ENCODE measurements at regions of chrX and their contacts with region 1.

Region 1: GRCh38 chrX:20159797-20160385 is 18.3 kb upstream of the EIF1AX start:
- DNase-seq: no peak
- ATAC-seq: no peak
- H3K4me3 ChIP-seq: no peak overlapping the region
- H3K27ac ChIP-seq: no peak overlapping the region
- H3K4me1 ChIP-seq: no peaks in the 10 kb centered on the region
- H3K27me3 ChIP-seq: peaks cover 0 to 3% (median 0%) of the 10 kb centered on the region in 3 donors
- CTCF ChIP-seq: no peak

Region 2: GRCh38 chrX:20205927-20206708 is 46.2 kb after region 1 on chrX:
- intact Hi-C with region 1: loop called in 1 of 2 experiments (anchors 5 kb)
- DNase-seq: peak; percentile 13 to 62
- ATAC-seq: peak; percentile 85 to 97 (median 90)
- H3K4me3 ChIP-seq: no peak overlapping the region
- H3K27ac ChIP-seq: peak overlapping the region; percentile 64
- H3K4me1 ChIP-seq: peaks cover 21% of the 10 kb centered on the region
- H3K27me3 ChIP-seq: peaks cover 0 to 14% (median 0%) of the 10 kb centered on the region in 3 donors
- CTCF ChIP-seq: no peak

Region 3: GRCh38 chrX:20452487-20452886 is 292.6 kb after region 1 on chrX:
- intact Hi-C with region 1: no loop called
- DNase-seq: no peak
- ATAC-seq: no peak
- H3K4me3 ChIP-seq: no peak overlapping the region
- H3K27ac ChIP-seq: no peak overlapping the region
- H3K4me1 ChIP-seq: no peaks in the 10 kb centered on the region
- H3K27me3 ChIP-seq: no peaks in the 10 kb centered on the region
- CTCF ChIP-seq: no peak